CD4-positive, alpha-beta T cell (primary cell): ENCODE measurements at regions of chr9 and their contacts with region 1.

Region 1: GRCh38 chr9:124894741-124895170 is 32.8 kb downstream of the ARPC5L start:
- DNase-seq: peak in 11 of 14 experiments; percentile 10 to 77 (median 37)
- ATAC-seq: peak; percentile 96
- H3K4me3 ChIP-seq: no peak overlapping the region
- H3K4me3 Mint-ChIP-seq: no peak overlapping the region
- H3K27ac ChIP-seq: no peak overlapping the region
- H3K27ac Mint-ChIP-seq: no peak overlapping the region
- H3K4me1 ChIP-seq: peaks cover 8% of the 10 kb centered on the region
- H3K4me1 Mint-ChIP-seq: peaks cover 14% of the 10 kb centered on the region
- H3K27me3 ChIP-seq: no peaks in the 10 kb centered on the region
- H3K27me3 Mint-ChIP-seq: peaks cover 7% of the 10 kb centered on the region
- CTCF ChIP-seq: peak; percentile 31

Region 2: DNA sequence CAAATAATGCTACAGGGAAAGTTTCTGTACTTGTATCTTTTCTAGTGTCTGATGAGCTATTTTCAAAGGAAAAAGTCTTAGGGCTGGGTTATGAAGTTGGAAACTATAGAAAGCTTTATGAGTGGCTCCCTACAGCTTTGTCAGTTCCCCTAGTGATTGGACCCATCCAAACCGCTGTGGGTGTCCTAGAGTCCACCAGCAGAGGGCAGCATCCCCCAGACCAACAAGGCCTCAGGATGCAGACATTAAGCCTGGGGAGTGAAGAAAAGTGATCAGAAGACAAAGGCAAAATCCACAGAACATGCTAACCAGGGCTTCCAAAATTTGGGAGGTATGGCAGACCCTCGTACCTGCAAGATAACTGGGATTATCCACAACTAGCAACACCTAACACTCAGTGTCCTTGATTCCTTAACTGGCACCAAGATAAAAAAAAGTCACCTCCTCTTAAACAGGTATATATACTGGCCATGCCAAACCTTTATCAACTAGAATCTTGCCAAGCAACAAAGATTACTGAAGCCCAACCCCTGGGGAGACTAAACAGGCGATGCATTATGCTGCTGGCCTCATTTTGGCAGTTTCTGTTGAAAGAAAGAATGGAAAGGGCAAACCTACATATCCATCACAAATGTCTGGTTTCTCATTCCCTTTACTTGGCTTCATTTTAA is 277.1 kb before region 1 on chr9:
- CTCF ChIA-PET with region 1: no interaction called
- POLR2A ChIA-PET with region 1: no interaction called
- intact Hi-C with region 1: loop called in 1 of 2 experiments (anchors 5 kb)
- DNase-seq: peak; percentile 56 to 82 (median 63)
- ATAC-seq: peak; percentile 71
- H3K4me3 ChIP-seq: no peak overlapping the region
- H3K4me3 Mint-ChIP-seq: no peak overlapping the region
- H3K27ac ChIP-seq: no peak overlapping the region
- H3K27ac Mint-ChIP-seq: no peak overlapping the region
- H3K4me1 ChIP-seq: no peaks in the 10 kb centered on the region
- H3K4me1 Mint-ChIP-seq: no peaks in the 10 kb centered on the region
- H3K27me3 ChIP-seq: peaks cover 0 to 6% of the 10 kb centered on the region in 2 experiments
- H3K27me3 Mint-ChIP-seq: peaks cover 12% of the 10 kb centered on the region
- CTCF ChIP-seq: peak; percentile 74

Region 3: DNA sequence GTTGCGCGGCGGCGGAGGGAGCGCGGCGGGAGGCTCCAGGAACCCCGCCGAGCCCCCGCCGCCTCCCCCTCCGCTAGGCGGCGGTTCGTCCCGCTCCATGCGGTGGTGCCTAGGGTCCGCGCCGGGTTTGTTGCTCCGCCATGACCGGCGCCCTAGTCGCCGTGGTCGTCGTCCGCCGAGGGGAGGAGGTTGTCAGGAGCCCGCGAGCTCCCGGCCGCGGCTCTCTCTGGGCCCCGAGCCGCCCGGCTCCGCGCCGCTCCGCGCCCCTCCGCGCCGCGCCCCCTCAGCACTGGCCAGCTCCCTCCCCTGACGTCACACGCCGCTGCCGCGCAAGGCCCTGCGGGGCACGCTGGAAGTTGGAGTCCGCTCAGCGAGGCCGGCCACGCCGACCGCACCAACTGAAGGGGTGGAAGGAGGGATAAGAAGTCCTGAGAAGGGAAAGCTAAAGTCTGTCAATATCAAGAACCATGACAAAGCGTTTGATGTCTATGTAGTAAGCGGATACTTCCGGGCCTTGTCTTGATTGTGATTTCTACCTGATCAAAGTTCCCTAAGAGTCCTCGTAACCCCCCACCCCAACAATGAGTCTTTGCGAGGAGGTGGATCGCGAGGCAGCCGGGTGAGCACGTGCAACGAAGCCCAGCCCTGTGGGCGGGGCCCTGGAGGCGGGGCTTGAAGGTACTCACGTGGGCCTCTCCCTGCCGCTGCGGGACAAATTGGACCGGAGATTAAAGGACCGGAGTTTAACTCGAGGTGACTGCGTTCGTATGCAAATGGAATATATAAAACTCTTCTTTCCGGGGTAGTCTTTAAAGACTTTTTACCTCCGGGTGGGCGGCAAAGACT is 123.5 kb before region 1 on chr9 and contains the start of gene NR6A1:
- CTCF ChIA-PET with region 1: interaction called, 4 read pairs
- POLR2A ChIA-PET with region 1: interaction called, 3 read pairs
- intact Hi-C with region 1: loop called in 1 of 2 experiments (anchors 1 kb)
- DNase-seq: peak; percentile 81 to 97 (median 90)
- ATAC-seq: peak; percentile 88
- H3K4me3 ChIP-seq: peak within 1 kb of the TSS; percentile 59
- H3K4me3 Mint-ChIP-seq: peak within 1 kb of the TSS; percentile 90
- H3K27ac ChIP-seq: no peak within 1 kb of the TSS
- H3K27ac Mint-ChIP-seq: peak within 1 kb of the TSS; percentile 32
- H3K4me1 ChIP-seq: peaks cover 32% of the 10 kb centered on the region
- H3K4me1 Mint-ChIP-seq: peaks cover 39% of the 10 kb centered on the region
- H3K27me3 ChIP-seq: peaks cover 34 to 71% of the 10 kb centered on the region in 2 experiments
- H3K27me3 Mint-ChIP-seq: peaks cover 87% of the 10 kb centered on the region
- CTCF ChIP-seq: no peak
- total RNA-seq, gene NR6A1: not detected

Region 4: DNA sequence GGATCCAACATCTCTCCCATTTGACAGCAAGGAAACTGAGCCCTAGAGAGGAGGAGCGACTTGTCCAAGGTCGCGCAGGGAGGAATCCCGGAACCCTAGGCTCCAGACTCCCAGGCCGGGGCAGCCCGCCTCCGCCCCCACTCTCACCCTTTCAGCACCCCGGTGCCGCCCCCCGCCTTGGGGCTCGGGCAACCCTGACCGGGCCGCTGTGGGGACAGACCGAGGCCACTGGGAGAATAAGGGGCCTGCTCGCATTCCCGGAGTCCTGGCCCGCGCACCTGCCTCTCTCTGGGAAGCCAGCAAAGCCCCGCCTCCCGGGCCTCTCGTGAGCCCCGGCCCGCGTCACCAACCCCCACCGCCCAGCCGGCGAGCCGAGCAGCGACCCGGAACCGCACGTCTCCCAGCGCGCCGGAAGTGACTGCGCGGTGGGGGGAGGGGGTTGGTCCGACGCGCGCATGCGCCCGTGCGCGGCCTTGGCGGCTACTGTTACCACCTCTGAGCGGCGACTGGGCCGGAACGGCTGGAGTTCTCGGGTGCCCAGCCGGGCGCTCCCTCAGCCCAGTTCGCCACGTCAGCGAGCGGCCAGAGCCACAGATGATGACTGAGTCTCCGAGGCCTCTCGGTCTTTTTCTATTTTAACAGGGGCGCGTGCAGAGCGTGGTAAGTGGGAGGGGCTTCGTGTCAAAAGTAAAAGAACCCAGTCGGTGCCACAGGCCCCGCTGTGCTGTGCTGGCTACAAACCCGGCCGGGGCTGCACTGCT is 46.1 kb after region 1 on chr9 and contains the start of gene GOLGA1:
- CTCF ChIA-PET with region 1: no interaction called
- POLR2A ChIA-PET with region 1: no interaction called
- intact Hi-C with region 1: no loop called
- DNase-seq: peak; percentile 86 to 98 (median 91)
- ATAC-seq: peak; percentile 84
- H3K4me3 ChIP-seq: peak within 1 kb of the TSS; percentile 96
- H3K4me3 Mint-ChIP-seq: peak within 1 kb of the TSS; percentile 94
- H3K27ac ChIP-seq: peak within 1 kb of the TSS; percentile 90 to 95
- H3K27ac Mint-ChIP-seq: peak within 1 kb of the TSS; percentile 90
- H3K4me1 ChIP-seq: peaks cover 20% of the 10 kb centered on the region
- H3K4me1 Mint-ChIP-seq: peaks cover 23% of the 10 kb centered on the region
- H3K27me3 ChIP-seq: no peaks in the 10 kb centered on the region
- H3K27me3 Mint-ChIP-seq: no peaks in the 10 kb centered on the region
- CTCF ChIP-seq: no peak
- total RNA-seq, gene GOLGA1: 12.9 to 22.2 TPM

Region 5: DNA sequence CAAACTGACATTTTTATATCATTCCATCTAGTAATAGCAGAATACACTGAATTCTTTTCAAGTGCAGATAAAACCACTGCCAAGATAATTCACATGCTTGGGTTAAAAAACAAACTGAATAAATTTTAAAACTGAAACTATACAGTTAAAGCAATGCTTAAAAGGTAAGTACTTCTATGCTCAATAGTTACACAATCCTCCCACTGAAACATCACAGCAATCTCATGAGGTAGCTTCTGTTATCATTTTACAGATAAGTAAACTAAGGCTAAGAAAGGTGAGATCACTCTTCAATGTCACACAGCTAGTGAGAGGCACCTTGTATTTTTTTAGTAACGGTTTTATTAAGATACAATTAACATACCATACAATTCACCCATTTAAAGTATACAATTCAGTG is 59.5 kb after region 1 on chr9:
- CTCF ChIA-PET with region 1: no interaction called
- POLR2A ChIA-PET with region 1: no interaction called
- intact Hi-C with region 1: no loop called
- DNase-seq: no peak
- ATAC-seq: no peak
- H3K4me3 ChIP-seq: no peak overlapping the region
- H3K4me3 Mint-ChIP-seq: no peak overlapping the region
- H3K27ac ChIP-seq: no peak overlapping the region
- H3K27ac Mint-ChIP-seq: no peak overlapping the region
- H3K4me1 ChIP-seq: no peaks in the 10 kb centered on the region
- H3K4me1 Mint-ChIP-seq: no peaks in the 10 kb centered on the region
- H3K27me3 ChIP-seq: no peaks in the 10 kb centered on the region
- H3K27me3 Mint-ChIP-seq: no peaks in the 10 kb centered on the region
- CTCF ChIP-seq: no peak

Region 6: GRCh38 chr9:125214186-125214585 is 319.4 kb after region 1 on chr9:
- CTCF ChIA-PET with region 1: no interaction called
- POLR2A ChIA-PET with region 1: no interaction called
- intact Hi-C with region 1: no loop called
- DNase-seq: no peak
- ATAC-seq: no peak
- H3K4me3 ChIP-seq: no peak overlapping the region
- H3K4me3 Mint-ChIP-seq: no peak overlapping the region
- H3K27ac ChIP-seq: no peak overlapping the region
- H3K27ac Mint-ChIP-seq: no peak overlapping the region
- H3K4me1 ChIP-seq: no peaks in the 10 kb centered on the region
- H3K4me1 Mint-ChIP-seq: no peaks in the 10 kb centered on the region
- H3K27me3 ChIP-seq: no peaks in the 10 kb centered on the region
- H3K27me3 Mint-ChIP-seq: no peaks in the 10 kb centered on the region
- CTCF ChIP-seq: no peak